ENCODE measurements at regions of chr2 and their contacts with region 1.

Region 1: GRCh38 chr2:71923887-71924533 is 223.7 kb downstream of the CYP26B1 start:
- DNase-seq: peak; percentile 76

Region 2: GRCh38 chr2:71861186-71862160 is 62.5 kb before region 1 on chr2:
- CTCF ChIA-PET with region 1: no interaction called
- POLR2A ChIA-PET with region 1: no interaction called
- DNase-seq: no peak

Region 3: DNA sequence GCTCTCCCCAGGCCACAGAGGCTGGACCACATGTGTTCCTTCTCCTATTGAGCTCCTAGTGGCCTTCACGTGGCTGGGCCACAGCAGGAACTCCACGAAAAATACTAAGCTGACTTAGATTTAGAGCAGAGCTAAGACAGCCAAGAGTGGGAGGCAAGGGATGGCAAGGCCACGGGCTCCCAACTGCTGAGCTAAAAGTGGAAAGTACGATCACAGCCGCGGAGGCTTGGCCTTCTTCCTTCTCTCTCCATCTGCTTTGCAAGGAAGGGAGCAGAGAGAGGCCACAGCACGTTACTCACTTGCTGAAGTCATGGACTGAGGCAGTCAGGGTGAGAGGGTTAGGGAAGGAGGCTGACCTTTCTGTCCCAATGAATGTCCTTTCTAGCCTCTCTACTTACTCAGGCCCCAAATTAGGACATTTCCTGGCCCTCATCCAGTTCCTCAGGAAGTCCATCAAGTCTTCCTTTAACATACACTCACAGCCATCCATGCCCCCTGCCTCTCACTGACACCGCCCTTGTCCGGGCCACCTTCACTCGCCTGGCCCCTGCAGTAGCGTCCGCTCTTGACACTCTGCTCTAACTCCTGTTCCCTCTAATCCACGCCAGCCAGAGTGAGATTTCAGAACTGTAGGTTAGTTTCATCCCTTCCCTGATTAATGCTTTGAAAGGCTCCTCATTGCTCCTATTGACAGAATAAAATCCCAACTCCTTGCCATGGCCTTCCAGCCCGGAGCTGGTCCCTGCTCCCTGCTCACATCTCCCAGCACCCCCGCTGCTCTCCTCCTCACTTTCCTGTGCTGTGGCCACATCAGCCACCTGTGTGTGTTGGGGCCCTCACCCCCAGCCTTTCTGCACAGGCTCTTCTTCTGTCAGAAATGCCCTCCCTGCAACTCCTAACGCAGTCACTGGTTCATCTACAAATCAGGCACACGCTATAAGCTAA is 19.5 kb after region 1 on chr2:
- CTCF ChIA-PET with region 1: no interaction called
- POLR2A ChIA-PET with region 1: no interaction called
- DNase-seq: no peak

Region 4: DNA sequence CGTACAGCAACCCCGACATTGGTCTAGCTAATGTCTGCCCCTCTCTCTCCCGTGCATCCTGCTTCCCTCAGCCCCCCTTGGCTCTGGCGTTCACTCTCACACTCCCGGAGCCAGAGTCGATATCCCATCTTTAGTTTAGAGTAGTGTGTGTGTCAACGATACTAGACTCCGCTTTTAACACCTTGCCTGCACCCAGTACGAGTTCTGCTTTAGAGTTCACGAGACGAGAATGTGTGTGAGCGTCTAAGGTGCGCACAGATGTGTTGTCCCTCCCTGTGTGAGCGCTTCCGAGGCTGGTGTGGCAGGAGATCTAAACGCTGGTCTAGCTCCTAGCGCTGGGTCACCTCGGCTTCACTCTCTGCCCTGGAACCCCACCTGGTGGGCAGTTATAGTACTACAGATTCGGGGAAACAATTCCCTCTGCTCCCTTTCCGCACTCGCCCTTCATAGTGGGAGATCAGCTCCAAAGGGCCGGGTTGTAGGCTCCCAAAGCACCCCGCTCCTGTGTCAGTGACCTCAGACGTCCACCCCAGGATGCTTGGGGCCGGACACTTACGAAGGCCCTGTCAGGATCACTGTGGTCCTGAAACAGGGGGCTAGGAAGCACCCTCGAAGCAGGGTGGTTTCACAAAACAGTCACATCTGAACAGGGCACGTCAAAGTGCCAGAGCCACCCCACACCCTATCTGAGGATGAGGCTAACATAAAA is 226.3 kb after region 1 on chr2:
- CTCF ChIA-PET with region 1: interaction called, 46 read pairs
- POLR2A ChIA-PET with region 1: interaction called, 4 read pairs
- DNase-seq: peak; percentile 83